ENCODE measurements at regions of chr22 and their contacts with region 1.

Region 1: DNA sequence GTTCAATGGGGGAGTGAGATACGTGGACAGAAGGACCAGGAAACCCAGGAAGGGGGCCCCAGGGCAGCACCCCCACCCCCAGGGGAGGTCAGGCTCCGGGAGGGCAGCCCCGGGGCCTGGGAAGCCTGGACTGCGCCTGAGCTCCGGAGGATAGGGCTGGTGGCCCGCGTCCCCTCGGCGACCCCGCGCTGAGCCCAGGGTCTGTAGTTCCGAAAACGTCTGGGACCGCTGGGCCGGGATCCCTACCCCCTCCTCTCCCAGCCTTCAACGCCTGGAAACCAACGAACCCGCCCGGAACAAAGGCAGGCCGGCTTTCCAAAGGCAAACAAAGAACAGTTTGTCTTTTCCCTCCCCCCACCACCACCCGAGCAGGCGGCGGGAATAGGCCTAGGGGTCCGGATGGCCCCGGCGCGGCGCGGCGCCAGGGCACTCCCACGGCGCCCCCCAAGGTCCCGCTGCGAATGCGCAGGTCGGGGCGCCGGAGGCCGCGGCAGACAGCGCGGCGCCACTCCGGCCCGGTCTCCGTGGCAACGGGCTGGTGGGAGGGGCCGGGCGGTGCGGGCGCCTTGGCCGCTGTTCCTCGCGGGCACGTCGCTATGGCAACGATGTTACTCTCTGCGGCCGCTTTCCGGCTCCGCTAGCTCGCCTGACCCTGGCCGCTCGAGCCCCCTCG is 58.5 kb downstream of the IGLL1 start:
- DNase-seq: peak; percentile 95
- H3K4me3 ChIP-seq: peak overlapping the region; percentile 51 to 62 (median 54)
- H3K27ac ChIP-seq: peak overlapping the region; percentile 87 to 98 (median 96)
- H3K4me1 ChIP-seq: peaks cover 24 to 48% (median 43%) of the 10 kb centered on the region in 4 donors
- H3K27me3 ChIP-seq: no peaks in the 10 kb centered on the region
- CTCF ChIP-seq: peak in 2 of 3 experiments; percentile 20 to 23
- EP300 ChIP-seq: peak; percentile 60
- POLR2A ChIP-seq: no peak

Region 2: DNA sequence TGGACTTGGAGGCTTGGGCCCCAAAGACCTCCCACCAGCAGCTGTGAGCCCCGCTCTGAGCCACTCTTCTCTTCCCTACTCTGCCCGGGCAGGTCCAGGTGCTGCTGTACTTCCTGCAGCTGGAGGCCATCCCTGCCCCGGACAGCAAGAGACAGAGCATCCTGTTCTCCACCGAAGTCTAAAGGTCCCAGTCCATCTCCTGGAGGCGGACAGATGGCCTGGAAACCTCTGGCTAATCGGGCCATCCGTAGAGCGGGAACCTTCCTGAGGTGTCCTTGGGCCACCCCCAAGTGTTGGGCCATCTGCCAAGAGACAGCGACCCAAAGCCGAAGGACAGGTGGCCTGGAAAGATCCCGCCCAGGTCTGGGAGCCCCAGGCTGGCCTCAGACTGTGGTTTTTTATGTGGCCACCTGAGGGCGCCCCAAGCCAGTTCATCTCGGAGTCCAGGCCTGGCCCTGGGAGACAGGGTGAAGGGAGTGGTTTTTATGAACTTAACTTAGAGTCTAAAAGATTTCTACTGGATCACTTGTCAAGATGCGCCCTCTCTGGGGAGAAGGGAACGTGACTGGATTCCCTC is 206.1 kb before region 1 on chr22:
- intact Hi-C with region 1: loop called (anchors 10 kb)
- DNase-seq: peak; percentile 90
- H3K4me3 ChIP-seq: no peak overlapping the region
- H3K27ac ChIP-seq: peak overlapping the region in 3 of 4 donors; percentile 4 to 40 (median 39)
- H3K4me1 ChIP-seq: peaks cover 0 to 5% (median 0%) of the 10 kb centered on the region in 4 donors
- H3K27me3 ChIP-seq: no peaks in the 10 kb centered on the region
- CTCF ChIP-seq: peak; percentile 53 to 70 (median 69)
- EP300 ChIP-seq: no peak
- POLR2A ChIP-seq: no peak

Region 3: GRCh38 chr22:23632178-23632577 is 110.6 kb after region 1 on chr22 and contains the start of gene DRICH1:
- intact Hi-C with region 1: no loop called
- DNase-seq: no peak
- H3K4me3 ChIP-seq: no peak within 1 kb of the TSS
- H3K27ac ChIP-seq: no peak within 1 kb of the TSS
- H3K4me1 ChIP-seq: no peaks in the 10 kb centered on the region
- H3K27me3 ChIP-seq: no peaks in the 10 kb centered on the region
- CTCF ChIP-seq: no peak
- EP300 ChIP-seq: no peak
- POLR2A ChIP-seq: no peak
- total RNA-seq, gene DRICH1: 0.33 TPM in 1 of 4 donors, not detected in the others